GM12878 (cell line): ENCODE measurements at regions of chr21 and their contacts with region 1.

Region 1: DNA sequence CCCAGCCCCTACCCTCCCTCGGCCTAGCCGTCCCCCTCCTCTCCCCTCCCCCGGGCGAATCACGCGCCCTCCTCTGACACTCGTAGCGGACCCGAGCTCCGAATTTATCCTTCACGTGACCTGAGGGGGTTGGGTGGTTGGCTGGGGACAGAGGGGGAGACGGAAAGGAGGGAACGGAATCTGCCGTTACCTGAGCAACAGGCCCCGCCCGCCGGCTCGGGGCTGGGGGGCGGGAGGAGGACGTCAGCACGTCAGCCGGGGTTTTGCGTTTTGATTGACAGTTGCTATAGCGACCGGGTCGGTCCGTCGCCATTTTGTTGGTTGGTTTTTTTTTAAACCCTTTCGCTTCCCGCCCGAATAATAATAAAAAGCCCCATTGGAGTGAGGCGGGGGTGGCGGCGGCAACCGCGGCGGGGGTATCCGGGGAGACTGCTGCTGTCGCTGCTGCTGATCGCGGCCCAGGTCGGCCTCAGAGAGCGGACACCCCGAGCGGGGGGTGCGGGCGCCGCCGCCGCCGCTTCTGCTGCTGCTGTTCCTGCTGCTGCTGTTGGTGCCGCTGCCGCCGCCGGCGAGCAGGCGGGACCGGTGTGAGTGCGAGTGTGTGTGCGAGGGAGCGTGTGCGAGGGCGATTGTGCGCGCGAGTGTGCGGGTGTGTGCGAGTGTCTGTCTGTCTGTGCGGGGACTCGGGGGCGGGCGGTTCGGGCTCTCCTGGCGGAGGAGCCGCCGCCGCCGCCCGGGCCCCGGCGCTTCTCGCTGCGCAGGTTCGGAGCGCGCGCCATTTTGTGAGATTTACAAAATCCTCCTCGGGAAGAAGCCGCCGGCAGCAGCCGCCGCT is at the start of gene DYRK1A:
- DNase-seq: peak; percentile 93
- ATAC-seq: peak; percentile 80
- H3K4me3 ChIP-seq: peak within 1 kb of the TSS; percentile 89
- H3K27ac ChIP-seq: peak within 1 kb of the TSS; percentile 97
- H3K4me1 ChIP-seq: peaks cover 8% of the 10 kb centered on the region; the same call in 1 of the 2 replicates
- H3K27me3 ChIP-seq: no peaks in the 10 kb centered on the region
- CTCF ChIP-seq: no peak
- EP300 ChIP-seq: peak in 1 of 2 experiments; percentile 59; a peak in 2 of 4 replicates
- POLR2A ChIP-seq: peak; percentile 85
- RAD21 ChIP-seq: no peak
- polyA plus RNA-seq, gene DYRK1A: 4.8 to 9.1 TPM

Region 2: DNA sequence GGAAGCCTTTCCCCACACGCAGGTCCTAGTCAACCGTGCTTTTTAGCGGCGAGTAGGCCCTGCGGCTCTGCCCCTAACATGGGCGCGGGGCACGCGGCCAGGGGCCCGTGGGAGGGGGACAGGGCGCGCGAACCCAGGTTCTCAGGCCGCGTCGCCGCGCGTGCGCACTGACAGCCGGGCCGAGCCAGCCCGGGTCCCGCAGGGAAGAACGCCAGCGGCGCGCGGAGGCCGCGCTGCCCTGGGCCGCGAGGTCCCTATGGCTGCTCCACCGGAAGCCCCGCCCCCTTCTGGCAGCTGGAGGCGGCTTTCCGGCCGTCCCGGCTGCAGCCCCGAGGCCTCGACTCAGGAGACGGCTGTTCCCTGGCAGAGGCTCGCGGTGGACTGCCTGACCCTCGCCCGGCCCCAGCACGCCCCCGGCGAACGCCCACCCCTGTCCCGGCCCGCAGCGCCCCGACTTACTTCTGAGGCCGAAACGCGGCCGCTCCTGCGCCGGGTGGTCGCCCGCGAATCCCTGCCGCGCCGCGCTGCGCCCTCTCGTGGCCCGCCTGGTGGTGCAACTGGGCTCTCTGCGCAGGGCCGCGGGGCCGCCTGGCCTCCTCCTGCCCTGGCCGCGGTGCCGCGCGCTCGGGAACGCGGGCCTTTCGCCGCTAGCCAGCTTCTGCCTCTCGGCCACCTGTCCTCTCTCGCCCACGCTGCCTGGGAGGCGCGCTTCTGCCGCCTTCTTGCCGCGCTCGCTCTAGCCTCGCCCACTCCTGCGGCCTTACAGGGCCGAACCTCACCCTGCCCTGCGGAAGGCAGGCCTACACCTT is 376.8 kb before region 1 on chr21:
- CTCF ChIA-PET with region 1: no interaction called
- POLR2A ChIA-PET with region 1: no interaction called
- RAD21 ChIA-PET with region 1: no interaction called
- SMC1A ChIA-PET with region 1: no interaction called
- in situ Hi-C with region 1: no loop called
- intact Hi-C with region 1: loop called (anchors 10 kb)
- DNase-seq: peak; percentile 45
- ATAC-seq: peak; percentile 97
- H3K4me3 ChIP-seq: peak overlapping the region; percentile 76
- H3K27ac ChIP-seq: peak overlapping the region; percentile 56
- H3K4me1 ChIP-seq: no peaks in the 10 kb centered on the region
- H3K27me3 ChIP-seq: no peaks in the 10 kb centered on the region
- CTCF ChIP-seq: peak; percentile 53 to 64 (median 60); a peak in 5 of 6 replicates
- EP300 ChIP-seq: no peak
- POLR2A ChIP-seq: peak; percentile 76
- RAD21 ChIP-seq: peak; percentile 43

Region 3: DNA sequence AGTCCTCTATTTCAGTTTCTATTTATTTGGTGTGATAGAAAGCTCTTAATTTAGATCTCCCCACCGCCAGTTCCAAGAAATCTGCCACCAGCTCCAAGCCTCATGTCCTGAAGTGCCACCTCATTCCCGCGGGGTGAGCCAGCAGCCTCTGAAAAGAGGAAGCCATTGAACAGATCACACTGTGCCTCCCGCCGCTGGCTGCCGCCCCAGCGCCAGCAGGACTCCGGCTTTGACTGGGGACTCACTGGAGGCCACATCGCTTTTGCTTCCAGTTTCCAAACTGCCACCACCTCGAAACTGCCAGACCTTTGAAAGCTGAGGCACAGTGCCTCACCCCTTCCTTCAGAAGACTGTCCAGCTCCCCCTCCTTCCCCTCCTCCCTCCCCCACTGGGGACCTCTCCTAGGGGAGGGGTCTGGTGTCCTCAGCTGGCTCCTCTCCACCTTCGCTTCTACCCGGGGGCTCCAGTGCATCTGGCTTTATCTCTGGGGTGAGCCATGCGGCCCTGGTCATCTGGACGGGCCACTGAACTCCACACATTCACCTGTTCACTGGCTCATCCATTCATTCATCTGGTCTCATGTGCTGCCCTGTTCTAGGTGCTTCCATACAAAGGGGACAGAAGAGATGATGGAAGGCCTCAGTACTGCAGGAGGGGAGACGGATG is 158.5 kb before region 1 on chr21:
- CTCF ChIA-PET with region 1: no interaction called
- POLR2A ChIA-PET with region 1: no interaction called
- RAD21 ChIA-PET with region 1: interaction called, 7 read pairs
- SMC1A ChIA-PET with region 1: no interaction called
- in situ Hi-C with region 1: no loop called
- intact Hi-C with region 1: loop called (anchors 2 kb)
- DNase-seq: peak; percentile 68
- ATAC-seq: peak; percentile 79
- H3K4me3 ChIP-seq: peak overlapping the region; percentile 43
- H3K27ac ChIP-seq: peak overlapping the region; percentile 96
- H3K4me1 ChIP-seq: peaks cover 40% of the 10 kb centered on the region
- H3K27me3 ChIP-seq: no peaks in the 10 kb centered on the region
- CTCF ChIP-seq: 0 out of 6 replicates have a peak, but pooled peaks of 1 of the 3 experiments have one; percentile 7
- EP300 ChIP-seq: peak in 1 of 2 experiments; percentile 39; a peak in 1 of 4 replicates
- POLR2A ChIP-seq: peak; percentile 68
- RAD21 ChIP-seq: 0 out of 2 replicates have a peak, but pooled peaks have one; percentile 1

Region 4: DNA sequence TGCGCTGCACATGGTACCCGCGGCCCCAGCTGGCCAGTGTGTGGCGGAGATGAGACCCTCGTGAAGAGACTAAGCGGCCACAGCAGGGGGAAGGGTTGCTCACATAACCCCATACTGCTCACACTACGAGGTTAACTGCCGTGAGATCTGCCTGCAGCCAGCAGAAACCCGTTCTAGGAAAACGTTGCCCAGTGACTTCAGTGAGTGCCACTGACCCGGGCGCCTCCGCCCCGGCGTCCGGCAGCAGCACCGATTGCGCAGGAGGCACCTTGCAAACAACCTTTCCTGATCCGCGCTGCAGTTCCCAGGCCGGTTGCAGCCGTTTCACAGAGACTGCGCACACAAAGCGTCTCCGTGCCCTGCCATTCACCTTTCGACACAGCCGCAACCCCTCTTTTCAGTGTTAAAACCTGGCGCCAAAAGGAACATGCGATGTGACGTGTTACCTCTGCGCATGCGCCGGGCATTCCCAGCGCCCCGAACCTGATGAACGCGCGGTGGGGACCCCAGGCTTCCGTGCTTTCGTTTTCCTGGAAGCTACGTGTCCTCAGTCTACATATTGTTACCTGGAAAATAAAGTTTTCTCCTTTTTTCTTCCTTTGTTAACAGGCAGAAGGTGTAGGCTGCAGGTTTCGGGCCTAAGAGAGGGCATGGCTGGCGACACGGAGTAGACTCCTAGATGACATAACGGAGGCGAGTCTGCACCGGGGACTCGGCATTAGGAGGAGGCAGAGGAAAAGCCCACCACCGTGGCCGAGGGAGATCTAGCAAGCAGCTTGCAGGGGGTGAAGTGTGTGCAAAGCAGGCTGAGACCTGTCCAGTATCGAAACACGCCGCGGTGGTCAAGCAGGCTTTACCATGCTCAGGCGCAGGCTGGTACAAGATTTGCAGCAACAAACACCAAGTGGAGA is 108.5 kb before region 1 on chr21:
- CTCF ChIA-PET with region 1: interaction called, 5 read pairs
- POLR2A ChIA-PET with region 1: interaction called, 7 read pairs
- RAD21 ChIA-PET with region 1: interaction called, 6 read pairs
- SMC1A ChIA-PET with region 1: interaction called, 4 read pairs
- in situ Hi-C with region 1: no loop called
- intact Hi-C with region 1: loop called (anchors 2 kb)
- DNase-seq: peak; percentile 87
- ATAC-seq: peak; percentile 83
- H3K4me3 ChIP-seq: peak overlapping the region; percentile 73
- H3K27ac ChIP-seq: peak overlapping the region; percentile 94
- H3K4me1 ChIP-seq: 0 out of 2 replicates have a peak, but pooled peaks cover 5% of the 10 kb centered on the region
- H3K27me3 ChIP-seq: no peaks in the 10 kb centered on the region
- CTCF ChIP-seq: no peak
- EP300 ChIP-seq: no peak
- POLR2A ChIP-seq: peak; percentile 68
- RAD21 ChIP-seq: no peak

Region 5: GRCh38 chr21:37380349-37381323 is 13.9 kb after region 1 on chr21:
- CTCF ChIA-PET with region 1: interaction called, 4 read pairs
- POLR2A ChIA-PET with region 1: interaction called, 8 read pairs
- RAD21 ChIA-PET with region 1: interaction called, 8 read pairs
- SMC1A ChIA-PET with region 1: interaction called, 27 read pairs
- in situ Hi-C with region 1: no loop called
- intact Hi-C with region 1: no loop called
- DNase-seq: no peak
- ATAC-seq: no peak
- H3K4me3 ChIP-seq: no peak overlapping the region
- H3K27ac ChIP-seq: no peak overlapping the region
- H3K4me1 ChIP-seq: peaks cover 7% of the 10 kb centered on the region
- H3K27me3 ChIP-seq: no peaks in the 10 kb centered on the region
- CTCF ChIP-seq: no peak
- EP300 ChIP-seq: no peak
- POLR2A ChIP-seq: no peak
- RAD21 ChIP-seq: no peak

Region 6: DNA sequence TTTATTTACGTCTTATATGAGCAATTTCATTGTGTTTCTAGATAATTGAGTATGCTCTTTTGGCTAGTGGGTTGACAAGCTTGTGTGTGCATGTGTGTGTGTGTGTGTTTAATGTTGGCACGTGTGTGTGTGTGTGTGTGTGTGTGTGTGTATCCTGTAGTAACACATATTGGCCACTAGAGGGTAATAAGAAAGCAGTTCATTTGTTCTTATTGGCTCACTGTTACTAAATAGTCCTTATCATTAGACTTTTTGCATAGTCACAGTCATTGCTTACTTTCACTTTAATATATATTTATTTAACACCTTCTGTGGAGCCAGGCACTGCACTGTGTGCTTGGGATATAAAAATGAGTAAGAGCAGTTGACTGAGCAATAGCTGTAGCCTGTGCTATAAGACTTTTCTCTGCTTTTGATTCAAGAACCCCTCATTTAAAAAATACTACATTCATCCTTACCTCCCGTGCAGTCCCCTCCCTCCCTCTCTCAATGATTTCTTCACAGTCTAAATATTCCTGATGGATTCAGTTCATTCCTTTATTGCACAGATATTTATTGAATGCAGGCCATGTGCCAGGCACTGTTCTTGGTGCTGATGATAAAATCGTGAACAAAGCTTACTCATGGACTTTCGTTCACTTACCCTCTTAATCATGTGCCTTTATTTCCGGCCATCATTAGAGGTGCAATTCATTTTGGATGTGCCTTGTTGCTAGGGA is 96.5 kb after region 1 on chr21:
- CTCF ChIA-PET with region 1: interaction called, 13 read pairs
- POLR2A ChIA-PET with region 1: interaction called, 3 read pairs
- RAD21 ChIA-PET with region 1: no interaction called
- SMC1A ChIA-PET with region 1: interaction called, 20 read pairs
- in situ Hi-C with region 1: no loop called
- intact Hi-C with region 1: loop called (anchors 5 kb)
- DNase-seq: peak; percentile 12
- ATAC-seq: peak; percentile 76
- H3K4me3 ChIP-seq: no peak overlapping the region
- H3K27ac ChIP-seq: no peak overlapping the region
- H3K4me1 ChIP-seq: peaks cover 11% of the 10 kb centered on the region
- H3K27me3 ChIP-seq: no peaks in the 10 kb centered on the region
- CTCF ChIP-seq: peak; percentile 65 to 79 (median 76)
- EP300 ChIP-seq: no peak
- POLR2A ChIP-seq: no peak
- RAD21 ChIP-seq: peak; percentile 46; the same call in 1 of the 2 replicates

Region 7: GRCh38 chr21:37642493-37642892 is 275.8 kb after region 1 on chr21:
- CTCF ChIA-PET with region 1: no interaction called
- POLR2A ChIA-PET with region 1: no interaction called
- RAD21 ChIA-PET with region 1: no interaction called
- SMC1A ChIA-PET with region 1: no interaction called
- in situ Hi-C with region 1: no loop called
- intact Hi-C with region 1: loop called (anchors 5 kb)
- DNase-seq: no peak
- ATAC-seq: peak; percentile 94
- H3K4me3 ChIP-seq: no peak overlapping the region
- H3K27ac ChIP-seq: no peak overlapping the region
- H3K4me1 ChIP-seq: no peaks in the 10 kb centered on the region
- H3K27me3 ChIP-seq: 0 out of 4 replicates have a peak, but pooled peaks cover 0 to under 1% of the 10 kb centered on the region in 2 experiments
- CTCF ChIP-seq: peak; percentile 36 to 65 (median 45); a peak in 4 of 6 replicates
- EP300 ChIP-seq: no peak
- POLR2A ChIP-seq: no peak
- RAD21 ChIP-seq: peak; percentile 75